ENCODE measurements at regions of chr7 and their contacts with region 1.

Region 1: GRCh38 chr7:12389089-12389700 is 14.5 kb downstream of the VWDE start:
- DNase-seq: no peak
- ATAC-seq: peak; percentile 64
- H3K4me3 Mint-ChIP-seq: no peak overlapping the region
- H3K27ac Mint-ChIP-seq: no peak overlapping the region
- H3K4me1 Mint-ChIP-seq: no peaks in the 10 kb centered on the region
- H3K27me3 Mint-ChIP-seq: peaks cover 1% of the 10 kb centered on the region
- CTCF ChIP-seq: no peak

Region 2: GRCh38 chr7:11212080-11212711 is 1177.0 kb before region 1 on chr7:
- CTCF ChIA-PET with region 1: no interaction called
- POLR2A ChIA-PET with region 1: no interaction called
- intact Hi-C with region 1: no loop called
- DNase-seq: no peak
- ATAC-seq: peak; percentile 81
- H3K4me3 Mint-ChIP-seq: no peak overlapping the region
- H3K27ac Mint-ChIP-seq: no peak overlapping the region
- H3K4me1 Mint-ChIP-seq: no peaks in the 10 kb centered on the region
- H3K27me3 Mint-ChIP-seq: no peaks in the 10 kb centered on the region
- CTCF ChIP-seq: peak; percentile 49

Region 3: DNA sequence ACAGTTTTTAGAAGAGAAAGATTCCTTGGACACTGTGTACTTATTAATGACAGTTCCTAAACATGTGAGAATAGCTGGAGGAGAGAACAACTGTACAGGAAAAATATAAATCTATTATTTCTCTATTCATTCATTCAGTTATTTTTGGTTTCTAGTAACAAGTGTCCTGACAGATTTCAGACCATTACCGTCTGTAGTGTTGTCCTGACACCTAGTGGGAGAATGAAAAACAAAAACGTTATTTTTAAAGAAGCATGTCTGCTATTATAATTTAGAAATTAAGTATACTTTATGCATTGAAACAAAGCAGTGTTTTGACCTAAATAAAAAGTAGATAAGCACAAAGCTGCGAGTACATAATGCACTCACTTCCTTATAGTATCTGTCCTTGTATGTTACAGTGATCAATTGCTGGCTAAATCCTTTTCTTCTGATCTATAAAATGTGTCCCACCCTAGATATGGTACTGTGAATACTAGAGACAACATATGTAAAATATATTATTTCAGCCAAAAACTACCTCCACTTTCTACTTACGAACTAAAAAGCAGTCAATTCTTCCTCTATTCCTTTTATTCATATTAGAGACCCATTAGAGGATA is 873.8 kb after region 1 on chr7:
- CTCF ChIA-PET with region 1: no interaction called
- POLR2A ChIA-PET with region 1: no interaction called
- intact Hi-C with region 1: loop called (anchors 2 kb)
- DNase-seq: no peak
- ATAC-seq: no peak
- H3K4me3 Mint-ChIP-seq: no peak overlapping the region
- H3K27ac Mint-ChIP-seq: no peak overlapping the region
- H3K4me1 Mint-ChIP-seq: no peaks in the 10 kb centered on the region
- H3K27me3 Mint-ChIP-seq: peaks cover 3% of the 10 kb centered on the region
- CTCF ChIP-seq: peak; percentile 38